Aorta (tissue), 5 donors: ENCODE measurements at regions of chr10 and their contacts with region 1.

Region 1: DNA sequence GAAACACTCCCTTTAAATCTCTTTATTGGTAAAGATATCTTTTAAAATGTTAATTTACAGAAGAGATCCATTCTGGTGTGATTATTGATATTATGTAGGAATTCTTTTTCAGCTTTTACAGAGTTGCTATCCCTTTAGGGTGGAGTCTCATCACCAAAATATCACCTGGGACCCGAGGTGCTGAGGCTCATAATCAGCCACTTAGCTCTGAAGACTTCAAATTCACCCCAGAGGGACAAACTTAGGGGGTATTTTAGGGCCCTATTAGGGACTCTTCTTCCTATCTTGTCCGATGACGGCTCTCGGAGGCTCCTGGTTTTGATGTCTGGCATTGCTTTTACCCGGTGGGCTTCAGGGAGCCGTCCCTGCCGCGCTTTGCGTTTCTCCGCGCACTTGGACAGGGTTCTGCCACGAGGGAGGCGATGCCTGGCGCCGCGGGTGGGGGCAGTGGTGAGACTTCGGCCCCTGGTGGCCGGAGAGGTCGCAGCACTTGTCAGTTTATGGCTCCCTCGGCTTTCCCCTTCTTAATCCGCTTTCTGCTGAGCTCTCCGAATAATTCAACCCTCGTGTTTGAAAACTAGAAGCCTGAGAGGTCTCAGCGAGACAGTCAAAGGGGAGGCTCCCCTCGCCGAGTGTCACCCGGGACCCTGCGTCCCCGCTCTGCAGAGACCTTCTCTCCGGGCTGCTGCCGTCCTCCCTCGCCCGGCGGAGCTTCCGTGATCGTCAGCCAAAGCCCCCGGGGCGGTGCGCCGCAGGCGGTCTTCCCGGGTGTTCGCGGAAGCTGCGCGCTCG is 27.8 kb downstream of the RBM20 start:
- DNase-seq: peak; percentile 81 to 92
- ATAC-seq: peak; percentile 91
- H3K4me3 ChIP-seq: peak overlapping the region; percentile 84 to 85
- H3K27ac ChIP-seq: peak overlapping the region in 1 of 2 donors; percentile 78
- H3K4me1 ChIP-seq: peaks cover 2 to 6% of the 10 kb centered on the region in 2 donors
- H3K27me3 ChIP-seq: no peaks in the 10 kb centered on the region

Region 2: GRCh38 chr10:110429289-110429688 is 242.7 kb before region 1 on chr10:
- intact Hi-C with region 1: no loop called
- DNase-seq: no peak
- ATAC-seq: no peak
- H3K4me3 ChIP-seq: no peak overlapping the region
- H3K27ac ChIP-seq: no peak overlapping the region
- H3K4me1 ChIP-seq: no peaks in the 10 kb centered on the region
- H3K27me3 ChIP-seq: no peaks in the 10 kb centered on the region

Region 3: GRCh38 chr10:110629680-110630191 is 42.2 kb before region 1 on chr10:
- intact Hi-C with region 1: loop called in 1 of 2 experiments (anchors 5 kb)
- DNase-seq: no peak
- ATAC-seq: peak; percentile 78
- H3K4me3 ChIP-seq: no peak overlapping the region
- H3K27ac ChIP-seq: peak overlapping the region; percentile 97 to 98
- H3K4me1 ChIP-seq: peaks cover 3 to 4% of the 10 kb centered on the region in 2 donors
- H3K27me3 ChIP-seq: no peaks in the 10 kb centered on the region